Endothelial cell of umbilical vein (primary cell): ENCODE measurements at regions of chr3 and their contacts with region 1.

Region 1: DNA sequence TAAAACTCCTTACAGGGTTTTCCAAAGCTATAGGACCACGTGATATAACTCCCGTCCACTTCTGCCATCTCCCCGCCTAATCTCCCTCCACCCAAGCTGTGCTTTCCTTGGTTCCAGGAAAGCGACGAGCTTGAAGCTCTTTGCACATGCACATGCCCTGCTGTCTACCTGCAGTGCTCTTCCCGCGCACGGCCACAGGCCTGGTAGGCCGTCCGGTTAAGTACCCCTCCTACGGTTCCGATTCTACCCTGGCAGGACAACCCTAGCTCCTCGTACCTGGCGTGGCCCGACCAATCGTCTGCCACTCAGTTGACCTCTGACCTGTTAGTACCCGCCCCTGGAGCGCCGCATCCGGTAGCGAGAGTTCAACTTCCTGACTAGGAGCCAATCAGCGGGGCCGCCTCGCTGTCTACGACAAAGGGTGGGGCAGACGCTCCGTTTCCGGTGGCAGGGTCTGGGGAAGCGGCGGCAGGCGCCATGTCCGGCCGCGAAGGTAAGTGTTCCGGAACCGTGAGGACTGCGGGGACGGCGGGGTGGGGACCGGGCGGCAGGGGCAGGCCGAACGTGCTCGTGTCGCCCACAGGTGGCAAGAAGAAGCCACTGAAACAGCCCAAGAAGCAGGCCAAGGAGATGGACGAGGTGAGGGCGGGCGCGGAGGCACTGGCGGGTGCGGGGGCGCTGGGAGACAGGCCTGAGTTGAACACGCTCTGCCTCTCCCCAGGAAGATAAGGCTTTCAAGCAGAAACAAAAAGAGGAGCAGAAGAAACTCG is at the starts of genes CCDC51 and TMA7:
- DNase-seq: peak; percentile 96
- H3K4me3 ChIP-seq: peak within 1 kb of the TSS; percentile 73 to 91 (median 77)
- H3K27ac ChIP-seq: peak within 1 kb of the TSS; percentile 79
- H3K4me1 ChIP-seq: peaks cover 16% of the 10 kb centered on the region
- H3K27me3 ChIP-seq: no peaks in the 10 kb centered on the region
- CTCF ChIP-seq: no peak
- POLR2A ChIP-seq: peak; percentile 75
- total RNA-seq, gene CCDC51: 9.8 and 11.2 TPM in 2 replicates
- total RNA-seq, gene TMA7: 306 and 332 TPM in 2 replicates

Region 2: DNA sequence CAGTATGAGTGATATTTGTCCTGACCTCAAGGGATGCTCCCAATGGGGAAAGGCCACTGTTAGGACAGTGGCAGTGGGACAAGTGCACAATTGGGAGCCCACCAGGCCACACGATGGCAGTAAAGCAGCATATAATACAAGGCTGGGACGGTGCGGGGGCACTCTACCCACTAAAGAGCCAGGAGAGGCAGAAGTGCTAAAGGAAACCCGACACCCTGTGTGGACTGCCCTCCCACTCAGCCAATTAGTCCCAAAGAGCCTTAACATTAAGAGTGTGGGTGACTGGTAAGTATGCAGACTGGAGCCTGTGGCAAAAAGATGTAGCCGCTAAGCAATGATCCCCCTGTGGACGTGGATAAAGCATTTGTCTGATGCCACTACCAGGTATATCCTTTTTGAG is 207.3 kb before region 1 on chr3:
- CTCF ChIA-PET with region 1: interaction called, 296 read pairs
- POLR2A ChIA-PET with region 1: no interaction called
- dilution Hi-C with region 1: no loop called
- intact Hi-C with region 1: loop called (anchors 1 kb)
- DNase-seq: peak; percentile 69
- H3K4me3 ChIP-seq: no peak overlapping the region
- H3K27ac ChIP-seq: no peak overlapping the region
- H3K4me1 ChIP-seq: peaks cover 3% of the 10 kb centered on the region
- H3K27me3 ChIP-seq: no peaks in the 10 kb centered on the region
- CTCF ChIP-seq: peak; percentile 63 to 64
- POLR2A ChIP-seq: no peak

Region 3: GRCh38 chr3:48285132-48285531 is 154.9 kb before region 1 on chr3:
- CTCF ChIA-PET with region 1: interaction called, 723 read pairs
- POLR2A ChIA-PET with region 1: no interaction called
- dilution Hi-C with region 1: no loop called
- intact Hi-C with region 1: no loop called
- DNase-seq: no peak
- H3K4me3 ChIP-seq: no peak overlapping the region
- H3K27ac ChIP-seq: no peak overlapping the region
- H3K4me1 ChIP-seq: no peaks in the 10 kb centered on the region
- H3K27me3 ChIP-seq: no peaks in the 10 kb centered on the region
- CTCF ChIP-seq: no peak
- POLR2A ChIP-seq: no peak

Region 4: GRCh38 chr3:48334605-48335004 is 105.4 kb before region 1 on chr3:
- CTCF ChIA-PET with region 1: interaction called, 11 read pairs
- POLR2A ChIA-PET with region 1: no interaction called
- dilution Hi-C with region 1: no loop called
- intact Hi-C with region 1: no loop called
- DNase-seq: no peak
- H3K4me3 ChIP-seq: no peak overlapping the region
- H3K27ac ChIP-seq: no peak overlapping the region
- H3K4me1 ChIP-seq: no peaks in the 10 kb centered on the region
- H3K27me3 ChIP-seq: peaks cover 15 to 16% of the 10 kb centered on the region in 2 experiments
- CTCF ChIP-seq: no peak
- POLR2A ChIP-seq: no peak

Region 5: GRCh38 chr3:48410205-48411040 is 29.6 kb before region 1 on chr3:
- CTCF ChIA-PET with region 1: interaction called, 716 read pairs
- POLR2A ChIA-PET with region 1: no interaction called
- dilution Hi-C with region 1: no loop called
- intact Hi-C with region 1: no loop called
- DNase-seq: no peak
- H3K4me3 ChIP-seq: no peak overlapping the region
- H3K27ac ChIP-seq: no peak overlapping the region
- H3K4me1 ChIP-seq: no peaks in the 10 kb centered on the region
- H3K27me3 ChIP-seq: no peaks in the 10 kb centered on the region
- CTCF ChIP-seq: no peak
- POLR2A ChIP-seq: no peak

Region 6: GRCh38 chr3:48465531-48466378 is 25.8 kb after region 1 on chr3:
- CTCF ChIA-PET with region 1: interaction called, 23 read pairs
- POLR2A ChIA-PET with region 1: no interaction called
- dilution Hi-C with region 1: no loop called
- intact Hi-C with region 1: loop called (anchors 1 kb)
- DNase-seq: peak; percentile 100
- H3K4me3 ChIP-seq: peak overlapping the region in 2 of 3 experiments; percentile 44 to 45
- H3K27ac ChIP-seq: peak overlapping the region; percentile 98
- H3K4me1 ChIP-seq: peaks cover 24% of the 10 kb centered on the region
- H3K27me3 ChIP-seq: no peaks in the 10 kb centered on the region
- CTCF ChIP-seq: peak; percentile 81 to 82
- POLR2A ChIP-seq: peak; percentile 92

Region 7: DNA sequence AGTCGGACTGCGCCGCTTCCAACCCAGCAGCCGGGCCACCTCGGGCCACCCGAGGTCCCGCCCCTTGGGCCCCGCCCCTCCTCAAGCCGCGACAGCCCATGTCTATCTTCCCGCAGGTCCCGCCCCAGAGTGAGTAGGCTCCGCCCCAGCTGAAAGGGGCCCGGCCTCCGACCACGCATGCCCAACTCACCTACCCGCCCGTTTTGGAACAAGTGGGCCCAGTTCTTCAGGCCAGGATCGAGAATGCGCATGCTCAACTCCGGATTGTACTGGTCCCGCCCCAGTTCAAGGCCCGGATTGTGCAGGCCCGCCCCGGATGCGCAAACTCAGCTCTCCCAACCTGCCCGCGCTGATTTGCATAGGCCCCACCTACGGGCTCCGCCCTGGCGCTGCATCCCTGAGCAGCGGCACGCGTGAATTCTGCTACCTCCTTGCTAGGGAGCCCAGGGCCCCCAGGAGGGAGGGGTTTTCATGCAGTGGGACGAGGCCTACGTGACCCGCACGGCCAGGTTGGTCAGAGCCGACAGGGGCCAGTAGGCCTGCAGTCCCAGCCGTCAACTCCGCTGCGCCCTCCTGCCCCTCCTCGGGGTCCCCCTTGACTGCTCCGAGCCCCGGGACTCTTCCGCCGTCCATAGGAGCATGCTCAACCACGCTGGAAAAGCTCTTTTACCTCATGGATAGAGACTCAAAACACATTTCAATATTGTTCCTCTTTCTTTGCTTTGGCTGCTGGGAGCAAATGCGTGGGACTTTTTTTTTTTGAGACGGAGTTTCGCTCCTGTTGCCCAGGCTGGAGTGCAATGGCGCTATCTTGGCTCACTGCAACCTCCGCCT is 117.0 kb after region 1 on chr3 and contains the start of gene PFKFB4:
- CTCF ChIA-PET with region 1: interaction called, 63 read pairs
- POLR2A ChIA-PET with region 1: no interaction called
- dilution Hi-C with region 1: no loop called
- intact Hi-C with region 1: no loop called
- DNase-seq: peak; percentile 99
- H3K4me3 ChIP-seq: peak within 1 kb of the TSS; percentile 43 to 63 (median 53)
- H3K27ac ChIP-seq: no peak within 1 kb of the TSS
- H3K4me1 ChIP-seq: peaks cover 12% of the 10 kb centered on the region
- H3K27me3 ChIP-seq: no peaks in the 10 kb centered on the region
- CTCF ChIP-seq: no peak
- POLR2A ChIP-seq: peak; percentile 24
- total RNA-seq, gene PFKFB4: 4.2 and 4.9 TPM in 2 replicates